ENCODE measurements at regions of chr1 and their contacts with region 1.

Region 1: DNA sequence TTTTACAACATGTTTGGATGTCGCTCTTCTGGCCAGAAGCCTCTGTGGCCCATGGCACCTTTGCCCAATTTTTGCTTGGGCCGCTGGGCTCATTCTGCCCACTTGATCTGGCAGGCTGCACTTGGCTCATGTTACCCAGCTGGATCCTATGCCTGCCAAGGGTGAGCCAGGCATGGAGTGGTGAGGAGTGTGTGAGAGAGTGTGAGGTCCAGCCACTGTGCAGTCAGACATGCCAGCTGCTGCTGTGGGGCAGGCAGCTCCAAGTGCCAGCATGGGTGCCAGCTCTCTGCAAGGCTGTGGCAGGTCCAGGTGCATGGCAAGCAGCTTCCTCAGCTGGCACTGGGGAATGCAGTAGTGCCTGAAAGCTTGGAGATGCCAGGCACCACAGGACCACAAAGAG is 71.0 kb downstream of the EBNA1BP2 start:
- DNase-seq: peak in 2 of 10 donors; percentile 57 to 76

Region 2: GRCh38 chr1:43329995-43330751 is 229.1 kb after region 1 on chr1:
- intact Hi-C with region 1: no loop called
- DNase-seq: peak in 1 of 10 donors; percentile 55

Region 3: DNA sequence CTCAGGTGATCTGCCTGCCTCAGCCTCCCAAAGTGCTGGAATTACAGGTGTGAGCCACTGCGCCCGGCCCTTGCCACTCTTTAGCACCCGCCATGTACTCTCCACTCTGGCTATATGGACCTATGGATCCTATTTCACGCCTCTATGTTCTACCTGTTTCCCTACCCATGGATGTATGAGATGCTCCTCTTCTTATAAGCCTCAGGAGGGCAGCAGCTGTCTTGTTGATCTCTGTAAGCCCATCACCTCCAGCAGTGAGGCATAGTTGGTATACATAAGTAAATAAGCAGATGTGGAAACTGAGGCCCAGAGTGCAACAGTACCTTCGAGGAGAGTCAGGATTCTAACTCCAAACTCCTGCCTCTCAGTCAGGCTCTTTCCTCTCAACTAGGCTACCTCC is 807.8 kb after region 1 on chr1:
- intact Hi-C with region 1: loop called (anchors 10 kb)
- DNase-seq: no peak